Activated naive CD8-positive, alpha-beta T cell treated with anti-CD3 and anti-CD28 coated beads, Interleukin-2, amount 10 ng/mL, durations not matched to agents 7 days and 5 days (primary cell): ENCODE measurements at regions of chr16 and their contacts with region 1.

Region 1: GRCh38 chr16:50266337-50267091 is at the start of gene ADCY7:
- DNase-seq: peak; percentile 83
- ATAC-seq: peak; percentile 91
- H3K4me3 Mint-ChIP-seq: peak within 1 kb of the TSS; percentile 93
- H3K27ac Mint-ChIP-seq: peak within 1 kb of the TSS; percentile 94
- H3K4me1 Mint-ChIP-seq: peaks cover 70% of the 10 kb centered on the region
- H3K27me3 Mint-ChIP-seq: no peaks in the 10 kb centered on the region
- total RNA-seq, gene ADCY7: 172 to 177 TPM

Region 2: GRCh38 chr16:50281964-50282538 is 15.5 kb after region 1 on chr16:
- POLR2A ChIA-PET with region 1: interaction called, 51 read pairs
- DNase-seq: peak; percentile 73
- ATAC-seq: peak; percentile 79
- H3K4me3 Mint-ChIP-seq: peak overlapping the region; percentile 64
- H3K27ac Mint-ChIP-seq: peak overlapping the region; percentile 63
- H3K4me1 Mint-ChIP-seq: peaks cover 67% of the 10 kb centered on the region
- H3K27me3 Mint-ChIP-seq: no peaks in the 10 kb centered on the region